Activated CD8-positive, alpha-beta T cell treated with anti-CD3 and anti-CD28 coated beads for 36 hours (primary cell): ENCODE measurements at regions of chr2 and their contacts with region 1.

Region 1: GRCh38 chr2:171319164-171319810 is 114.5 kb downstream of the METTL8 start:
- DNase-seq: peak; percentile 78
- ATAC-seq: peak; percentile 88
- H3K4me3 Mint-ChIP-seq: peak overlapping the region; percentile 53
- H3K27ac Mint-ChIP-seq: peak overlapping the region; percentile 96
- H3K4me1 Mint-ChIP-seq: peaks cover 43% of the 10 kb centered on the region
- H3K27me3 Mint-ChIP-seq: no peaks in the 10 kb centered on the region
- CTCF ChIP-seq: no peak

Region 2: DNA sequence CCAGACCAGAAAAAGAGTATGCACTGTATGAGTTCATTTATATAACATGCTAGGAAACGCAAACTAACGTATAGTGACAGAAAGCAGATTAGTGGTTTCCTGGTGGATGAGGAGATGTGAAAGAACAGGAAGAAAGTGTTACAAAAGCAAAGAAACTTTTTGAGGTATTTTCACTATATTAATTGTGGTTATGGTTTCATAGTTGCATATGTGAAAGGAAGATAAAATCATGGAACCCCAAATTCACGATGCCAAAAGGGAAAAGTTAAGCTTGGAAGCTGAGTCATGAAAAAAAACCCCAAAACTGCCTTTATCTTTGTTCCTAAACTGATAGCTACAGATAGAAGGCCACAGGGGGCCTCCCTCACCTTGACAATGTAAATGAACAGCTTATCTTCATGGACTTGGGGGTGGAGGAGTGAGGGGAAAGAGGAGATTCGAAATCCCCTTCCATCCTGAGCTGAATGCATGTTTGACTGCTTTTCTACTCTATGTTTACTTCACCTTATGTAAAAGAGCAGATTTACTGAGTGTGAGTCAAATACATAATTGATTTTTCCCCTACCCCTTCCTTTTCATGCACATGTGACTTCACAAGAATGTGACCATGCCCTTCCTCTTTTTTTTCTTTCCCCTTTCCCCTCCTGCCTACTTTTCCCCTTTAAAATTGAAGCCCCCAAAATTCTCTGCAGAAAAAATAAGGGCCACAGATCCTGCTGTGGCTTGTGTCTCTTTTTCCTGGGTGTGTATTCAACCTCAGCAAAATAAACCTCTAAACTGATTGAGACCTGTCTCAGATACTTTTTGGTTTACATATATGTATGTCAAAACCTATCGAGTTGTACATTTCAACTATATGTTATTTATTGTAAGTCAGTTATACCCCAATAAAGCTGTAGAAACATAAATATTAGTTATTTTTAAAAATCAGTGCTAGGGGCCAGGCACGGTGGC is 58.5 kb before region 1 on chr2:
- CTCF ChIA-PET with region 1: interaction called, 10 read pairs
- POLR2A ChIA-PET with region 1: interaction called, 5 read pairs
- intact Hi-C with region 1: loop called (anchors 1 kb)
- DNase-seq: peak; percentile 45
- ATAC-seq: peak; percentile 86
- H3K4me3 Mint-ChIP-seq: no peak overlapping the region
- H3K27ac Mint-ChIP-seq: peak overlapping the region; percentile 50
- H3K4me1 Mint-ChIP-seq: peaks cover 25% of the 10 kb centered on the region
- H3K27me3 Mint-ChIP-seq: no peaks in the 10 kb centered on the region
- CTCF ChIP-seq: no peak